Heart left ventricle (tissue), 16 donors: ENCODE measurements at regions of chr13 and their contacts with region 1.

Region 1: DNA sequence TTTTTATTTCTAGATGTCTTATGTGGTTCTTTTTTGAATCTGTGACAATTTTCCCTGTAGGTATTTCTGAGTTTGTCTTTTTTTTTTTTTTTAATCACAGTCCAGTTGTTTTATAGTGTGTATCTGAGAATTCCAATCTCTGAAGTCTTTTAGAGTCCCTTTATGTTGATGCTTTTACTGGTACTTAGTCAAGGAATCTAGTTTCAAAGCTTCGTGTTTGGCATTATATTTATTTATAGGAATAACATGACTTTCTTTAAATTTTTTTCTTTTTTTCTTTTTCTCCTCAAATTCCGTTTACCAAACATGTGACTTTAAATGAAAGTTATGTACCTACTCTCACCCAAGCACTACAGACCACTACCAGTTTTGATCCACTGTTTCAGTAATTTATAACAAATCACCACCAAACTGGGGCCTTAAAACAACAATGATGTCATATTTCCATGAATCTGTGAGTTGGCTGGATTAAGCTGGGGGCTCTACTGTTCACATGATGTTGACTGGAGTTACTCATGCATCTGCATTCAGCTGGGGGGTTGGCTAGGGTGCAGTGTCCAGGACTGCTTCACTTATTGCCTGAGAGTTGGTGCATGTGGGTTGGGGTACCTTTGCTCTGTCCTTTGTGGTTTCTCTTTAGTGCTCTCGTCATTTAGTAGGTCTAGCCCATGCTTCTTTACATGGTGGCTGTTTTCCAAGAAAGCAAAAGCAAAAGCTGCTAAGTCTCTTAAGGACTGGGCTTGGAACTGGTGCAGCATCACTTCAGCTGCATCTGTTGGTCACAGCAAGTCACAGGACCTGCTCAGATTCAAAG is 22.3 kb downstream of the KCTD4 start:
- DNase-seq: peak in 1 of 5 donors; percentile 32
- ATAC-seq: peak in 3 of 4 donors; percentile 58 to 73 (median 61)
- H3K4me3 ChIP-seq: no peak overlapping the region
- H3K27ac ChIP-seq: no peak overlapping the region
- H3K4me1 ChIP-seq: peaks cover 0 to 11% (median 0%) of the 10 kb centered on the region in 12 donors
- H3K27me3 ChIP-seq: no peaks in the 10 kb centered on the region
- CTCF ChIP-seq: no peak
- POLR2A ChIP-seq: no peak

Region 2: GRCh38 chr13:45073809-45074208 is 104.7 kb before region 1 on chr13:
- intact Hi-C with region 1: loop called in 1 of 10 experiments (anchors 10 kb)
- DNase-seq: no peak
- ATAC-seq: no peak
- H3K4me3 ChIP-seq: no peak overlapping the region
- H3K27ac ChIP-seq: no peak overlapping the region
- H3K4me1 ChIP-seq: no peaks in the 10 kb centered on the region
- H3K27me3 ChIP-seq: no peaks in the 10 kb centered on the region
- CTCF ChIP-seq: no peak
- POLR2A ChIP-seq: no peak

Region 3: DNA sequence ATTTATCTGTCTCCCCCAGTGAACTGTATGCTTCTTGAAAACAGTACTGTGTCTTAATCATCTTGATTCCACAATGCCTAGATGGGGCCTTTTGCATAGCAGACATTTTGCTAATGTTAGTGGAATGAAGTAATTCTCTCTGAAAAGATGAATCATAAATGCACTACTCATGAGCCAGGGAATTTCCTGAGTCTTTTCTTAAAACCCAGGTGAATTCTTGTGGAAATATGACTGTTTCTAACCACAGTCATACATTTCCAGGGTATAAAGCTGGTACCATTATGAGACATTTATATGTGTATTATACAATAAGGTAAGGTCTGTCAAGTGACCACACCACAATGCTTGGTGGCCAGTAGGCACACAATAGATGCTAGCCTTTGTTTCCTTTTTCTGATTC is 27.8 kb after region 1 on chr13:
- intact Hi-C with region 1: no loop called
- DNase-seq: no peak
- ATAC-seq: peak in 3 of 4 donors; percentile 8 to 65 (median 16)
- H3K4me3 ChIP-seq: no peak overlapping the region
- H3K27ac ChIP-seq: peak overlapping the region in 11 of 12 donors; percentile 6 to 81 (median 67)
- H3K4me1 ChIP-seq: peaks cover 0 to 33% (median 15%) of the 10 kb centered on the region in 12 donors
- H3K27me3 ChIP-seq: no peaks in the 10 kb centered on the region
- CTCF ChIP-seq: no peak
- POLR2A ChIP-seq: no peak